Heart left ventricle (tissue), 16 donors: ENCODE measurements at regions of chr17 and their contacts with region 1.

Region 1: DNA sequence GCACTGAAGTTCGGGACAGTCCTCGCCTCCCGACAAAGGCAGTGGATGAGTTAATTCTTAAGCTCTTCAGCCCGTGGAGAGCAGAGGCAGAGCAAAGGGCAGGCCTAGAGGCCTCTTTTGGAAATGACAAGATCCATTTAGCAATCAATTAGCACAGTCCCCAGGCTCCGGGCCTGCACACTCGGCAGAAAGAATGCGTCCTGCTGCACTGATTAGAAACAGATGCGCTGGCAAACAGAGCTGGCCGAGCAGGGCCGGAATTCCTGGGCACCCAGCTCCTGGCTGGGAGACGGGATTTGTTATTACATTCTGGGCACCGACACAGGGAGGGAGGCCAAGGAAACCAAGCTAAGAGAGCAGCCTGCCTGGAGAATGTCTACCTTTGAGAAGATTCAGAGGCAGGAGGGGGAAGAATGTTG is 162.9 kb downstream of the COPRS start:
- DNase-seq: peak; percentile 83 to 94 (median 84)
- ATAC-seq: peak; percentile 94 to 96 (median 94)
- H3K4me3 ChIP-seq: no peak overlapping the region
- H3K27ac ChIP-seq: peak overlapping the region; percentile 31 to 84 (median 76)
- H3K4me1 ChIP-seq: peaks cover 0 to 56% (median 35%) of the 10 kb centered on the region in 12 donors
- H3K27me3 ChIP-seq: no peaks in the 10 kb centered on the region
- CTCF ChIP-seq: peak in 6 of 12 donors; percentile 23 to 37 (median 29)
- POLR2A ChIP-seq: no peak

Region 2: DNA sequence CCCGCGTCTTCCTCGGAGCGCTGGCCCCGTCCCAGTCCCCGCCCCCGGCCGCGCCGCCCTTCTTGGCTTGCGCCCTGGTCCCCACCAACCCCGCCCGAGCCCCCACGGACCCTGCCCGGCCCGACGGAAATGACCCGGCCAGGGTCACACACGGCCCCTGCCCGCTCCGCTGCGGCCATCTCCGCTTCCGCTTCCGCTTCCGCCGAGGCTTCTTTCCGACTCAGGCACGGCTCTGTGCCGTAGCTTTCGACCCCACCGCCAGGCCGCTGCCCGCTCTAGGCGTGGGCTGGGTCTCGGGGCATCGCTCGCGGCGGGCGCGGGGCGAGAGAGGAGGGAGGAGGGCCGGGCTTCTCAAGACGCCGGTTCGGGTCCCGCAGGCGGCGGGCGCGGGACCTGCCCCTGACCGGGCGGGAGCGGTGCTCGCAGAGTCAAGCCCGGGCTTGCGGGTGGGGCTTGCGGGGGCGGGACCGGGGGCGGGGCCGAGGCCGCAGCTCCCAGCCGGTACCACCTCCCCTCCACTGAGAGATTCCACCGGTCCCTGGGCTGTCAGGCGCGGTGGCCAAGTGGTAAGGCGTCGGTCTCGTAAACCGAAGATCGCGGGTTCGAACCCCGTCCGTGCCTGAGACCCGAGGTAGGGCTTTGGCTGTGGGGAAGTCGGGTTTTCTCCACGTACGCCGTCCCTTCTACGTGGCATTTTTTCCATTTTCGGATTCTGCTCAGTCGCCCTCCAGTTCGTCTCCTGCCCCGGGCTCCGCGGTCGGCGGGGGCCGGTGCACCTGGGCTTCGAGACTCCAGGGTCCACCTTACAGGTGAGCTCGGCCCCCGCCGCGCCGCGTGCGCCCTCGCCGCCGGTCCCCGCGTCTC is 146.4 kb before region 1 on chr17:
- intact Hi-C with region 1: loop called in 2 of 10 experiments (anchors 10 kb)
- DNase-seq: peak; percentile 90 to 96 (median 92)
- ATAC-seq: peak; percentile 88 to 95 (median 94)
- H3K4me3 ChIP-seq: peak overlapping the region; percentile 51 to 93 (median 80)
- H3K27ac ChIP-seq: peak overlapping the region; percentile 81 to 97 (median 94)
- H3K4me1 ChIP-seq: peaks cover 0 to 17% (median 3%) of the 10 kb centered on the region in 12 donors
- H3K27me3 ChIP-seq: no peaks in the 10 kb centered on the region
- CTCF ChIP-seq: no peak
- POLR2A ChIP-seq: peak in 1 of 2 donors; percentile 68

Region 3: DNA sequence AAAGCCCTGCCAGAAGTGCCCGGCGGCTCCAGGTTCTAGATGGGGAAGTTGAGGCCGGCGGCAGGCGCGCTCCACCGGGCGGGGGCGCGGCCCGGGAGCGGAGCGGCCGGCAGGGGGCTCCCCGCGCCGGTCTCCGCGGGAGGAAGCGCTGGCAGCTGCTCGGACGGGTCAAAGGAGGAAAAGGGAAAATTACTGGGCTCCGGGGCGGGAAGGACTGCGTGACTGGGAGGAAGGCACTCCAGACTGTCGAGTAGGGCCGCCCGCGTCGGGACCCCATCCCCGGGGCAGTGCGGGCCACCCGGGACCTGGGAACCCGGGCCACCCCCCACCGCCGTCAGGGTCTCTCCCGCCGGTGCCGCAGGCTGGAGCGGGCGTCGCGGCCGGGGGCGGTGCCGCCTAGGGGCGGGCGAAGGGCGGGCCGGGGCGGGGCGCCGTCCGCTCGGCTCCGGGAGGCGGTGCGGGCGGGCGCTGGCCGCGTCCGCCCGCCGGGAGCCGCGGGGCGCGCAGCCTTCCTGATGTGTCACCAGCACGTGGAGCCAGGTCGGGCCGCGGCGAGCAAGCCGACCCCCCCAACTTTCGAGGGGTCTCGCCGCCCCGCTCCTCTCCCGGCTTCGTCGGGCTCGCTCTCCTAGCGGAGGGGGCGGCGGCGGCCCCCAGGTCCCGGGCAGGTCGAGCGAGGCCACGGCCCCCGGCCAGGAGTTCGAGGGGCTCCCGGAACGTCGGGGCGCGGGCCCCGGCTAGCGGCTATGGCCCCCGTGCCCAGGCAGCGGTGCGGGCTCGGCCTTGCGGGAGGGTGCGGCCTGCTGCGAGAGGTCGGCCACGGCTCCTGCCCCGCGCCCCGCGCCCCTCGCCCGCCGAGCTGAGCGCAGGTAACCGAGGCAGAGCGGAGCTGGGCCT is 137.2 kb before region 1 on chr17:
- intact Hi-C with region 1: loop called in 6 of 10 experiments (anchors 2 to 10 kb)
- DNase-seq: peak; percentile 83 to 89 (median 84)
- ATAC-seq: peak; percentile 70 to 94 (median 88)
- H3K4me3 ChIP-seq: peak overlapping the region; percentile 51 to 79 (median 64)
- H3K27ac ChIP-seq: peak overlapping the region; percentile 65 to 96 (median 92)
- H3K4me1 ChIP-seq: peaks cover 0 to 43% (median 32%) of the 10 kb centered on the region in 12 donors
- H3K27me3 ChIP-seq: no peaks in the 10 kb centered on the region
- CTCF ChIP-seq: peak; percentile 56 to 98 (median 92)
- POLR2A ChIP-seq: peak in 1 of 2 donors; percentile 60

Region 4: DNA sequence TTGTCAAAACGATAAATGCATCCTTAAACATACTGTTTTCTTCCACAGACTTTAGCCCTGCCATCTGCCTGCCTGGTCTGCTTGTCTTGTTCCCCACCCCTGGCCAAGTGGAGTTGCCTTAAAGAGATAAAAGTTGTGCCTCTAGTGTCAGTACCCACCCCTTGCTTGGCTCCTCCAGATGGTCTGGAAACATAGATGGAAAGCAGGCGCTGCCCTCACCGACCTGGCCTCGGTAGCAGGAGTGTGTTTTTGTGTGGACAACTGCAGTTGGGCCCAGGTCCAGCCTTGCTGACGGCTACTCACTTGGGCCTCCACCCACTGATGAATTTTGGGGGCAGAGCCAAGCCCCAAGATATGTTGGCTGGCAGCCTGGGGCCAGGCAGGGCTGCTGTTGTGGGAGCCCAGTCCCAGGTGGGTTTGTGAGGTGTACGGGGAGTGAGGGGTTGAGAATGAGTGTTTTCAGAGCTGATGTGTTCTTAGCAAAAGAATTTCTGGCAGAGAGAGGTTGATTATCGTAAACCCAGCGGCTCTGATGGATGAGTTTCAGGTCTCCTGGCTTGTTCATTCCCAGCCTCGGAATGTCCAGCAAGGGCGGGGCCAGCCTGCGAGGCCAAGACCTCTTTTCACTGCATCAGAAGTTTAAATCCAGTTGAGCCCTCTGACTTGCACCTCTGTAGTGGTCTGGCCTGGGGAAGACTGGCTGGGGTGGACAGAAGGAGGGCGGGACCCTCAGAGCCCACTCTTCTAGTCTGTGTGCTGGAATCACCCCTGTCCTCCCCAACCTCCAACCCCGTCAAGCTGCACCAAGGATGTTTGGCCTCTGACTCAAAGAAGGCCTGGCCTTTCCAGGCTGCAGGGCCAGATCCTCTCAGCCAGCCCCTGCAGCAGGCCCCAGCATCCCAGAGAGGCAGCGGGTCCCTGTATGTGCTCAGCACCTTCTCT is 125.0 kb before region 1 on chr17:
- intact Hi-C with region 1: loop called in 4 of 10 experiments (anchors 5 to 10 kb)
- DNase-seq: peak; percentile 81 to 92 (median 88)
- ATAC-seq: peak; percentile 83 to 90 (median 87)
- H3K4me3 ChIP-seq: no peak overlapping the region
- H3K27ac ChIP-seq: peak overlapping the region; percentile 20 to 84 (median 68)
- H3K4me1 ChIP-seq: peaks cover 4 to 65% (median 51%) of the 10 kb centered on the region in 12 donors
- H3K27me3 ChIP-seq: no peaks in the 10 kb centered on the region
- CTCF ChIP-seq: no peak
- POLR2A ChIP-seq: no peak

Region 5: DNA sequence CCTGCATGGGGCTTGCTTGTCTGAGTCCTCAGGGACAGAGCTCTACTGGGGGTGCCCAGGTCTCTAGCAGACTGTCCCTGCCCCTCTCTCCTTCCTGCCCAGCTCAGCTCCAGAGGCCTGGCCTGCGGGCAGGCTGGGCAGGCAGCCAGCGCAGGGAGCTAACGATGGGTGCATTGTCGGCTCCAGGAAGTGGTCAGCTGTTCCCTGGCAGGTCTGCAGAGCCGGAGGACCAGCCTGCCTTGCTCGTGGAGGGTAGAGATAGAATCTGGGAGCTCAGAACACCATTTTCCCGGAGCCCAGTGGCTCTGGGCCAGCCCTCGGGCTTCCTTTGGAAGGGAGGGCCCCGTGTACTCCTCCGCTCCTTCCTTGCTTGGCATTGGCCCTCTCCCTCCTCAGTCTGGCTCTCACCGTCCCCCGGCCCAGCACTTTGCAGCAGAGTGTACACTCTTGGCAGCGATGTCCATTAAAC is 115.1 kb before region 1 on chr17:
- intact Hi-C with region 1: loop called in 3 of 10 experiments (anchors 10 kb)
- DNase-seq: peak; percentile 81 to 89 (median 87)
- ATAC-seq: peak; percentile 84 to 93 (median 89)
- H3K4me3 ChIP-seq: peak overlapping the region in 10 of 12 donors; percentile 5 to 31 (median 22)
- H3K27ac ChIP-seq: peak overlapping the region; percentile 63 to 96 (median 86)
- H3K4me1 ChIP-seq: peaks cover 5 to 65% (median 27%) of the 10 kb centered on the region in 12 donors
- H3K27me3 ChIP-seq: no peaks in the 10 kb centered on the region
- CTCF ChIP-seq: no peak
- POLR2A ChIP-seq: no peak

Region 6: GRCh38 chr17:31663576-31663975 is 32.6 kb before region 1 on chr17:
- intact Hi-C with region 1: no loop called
- DNase-seq: no peak
- ATAC-seq: no peak
- H3K4me3 ChIP-seq: no peak overlapping the region
- H3K27ac ChIP-seq: no peak overlapping the region
- H3K4me1 ChIP-seq: no peaks in the 10 kb centered on the region
- H3K27me3 ChIP-seq: no peaks in the 10 kb centered on the region
- CTCF ChIP-seq: no peak
- POLR2A ChIP-seq: no peak

Region 7: DNA sequence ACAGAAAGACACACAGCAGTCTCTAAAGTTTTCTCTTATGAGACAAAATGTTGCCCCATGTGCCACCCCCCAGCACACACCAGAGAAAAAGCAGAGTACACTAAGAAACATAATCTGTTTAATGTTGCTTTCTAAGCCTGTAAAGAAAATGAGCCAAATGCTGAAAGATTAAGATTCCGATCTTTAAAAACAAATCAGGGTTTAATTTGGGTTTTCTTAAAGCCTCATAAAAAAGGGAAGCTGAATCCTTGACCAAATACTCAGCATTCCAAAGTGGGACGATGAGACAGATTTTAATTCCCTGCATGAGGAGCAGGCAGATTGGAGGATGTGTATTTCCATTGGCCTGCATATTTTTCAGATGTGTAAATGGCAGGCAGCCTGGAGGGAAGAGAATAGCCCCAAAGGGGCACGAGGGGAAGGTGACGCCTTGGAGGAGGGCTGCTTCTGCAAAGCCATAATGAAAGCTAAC is 44.5 kb after region 1 on chr17:
- intact Hi-C with region 1: loop called in 4 of 10 experiments (anchors 1 to 5 kb)
- DNase-seq: no peak
- ATAC-seq: no peak
- H3K4me3 ChIP-seq: no peak overlapping the region
- H3K27ac ChIP-seq: peak overlapping the region in 5 of 12 donors; percentile 43 to 80 (median 70)
- H3K4me1 ChIP-seq: peaks cover 6 to 63% (median 22%) of the 10 kb centered on the region in 12 donors
- H3K27me3 ChIP-seq: peaks cover 0 to 4% (median 0%) of the 10 kb centered on the region in 9 donors
- CTCF ChIP-seq: no peak
- POLR2A ChIP-seq: no peak

Region 8: GRCh38 chr17:31869797-31870568 is 173.8 kb after region 1 on chr17:
- intact Hi-C with region 1: no loop called
- DNase-seq: no peak
- ATAC-seq: no peak
- H3K4me3 ChIP-seq: no peak overlapping the region
- H3K27ac ChIP-seq: no peak overlapping the region
- H3K4me1 ChIP-seq: no peaks in the 10 kb centered on the region
- H3K27me3 ChIP-seq: no peaks in the 10 kb centered on the region
- CTCF ChIP-seq: no peak
- POLR2A ChIP-seq: no peak